Activated naive CD4-positive, alpha-beta T cell treated with anti-CD3 and anti-CD28 coated beads for 36 hours (primary cell): ENCODE measurements at regions of chr3 and their contacts with region 1.

Region 1: GRCh38 chr3:129112308-129113052 is 9.1 kb downstream of the RAB43 start:
- DNase-seq: peak; percentile 93
- H3K4me3 Mint-ChIP-seq: peak overlapping the region; percentile 68
- H3K27ac Mint-ChIP-seq: peak overlapping the region; percentile 96
- H3K4me1 Mint-ChIP-seq: peaks cover 84% of the 10 kb centered on the region
- H3K27me3 Mint-ChIP-seq: no peaks in the 10 kb centered on the region

Region 2: DNA sequence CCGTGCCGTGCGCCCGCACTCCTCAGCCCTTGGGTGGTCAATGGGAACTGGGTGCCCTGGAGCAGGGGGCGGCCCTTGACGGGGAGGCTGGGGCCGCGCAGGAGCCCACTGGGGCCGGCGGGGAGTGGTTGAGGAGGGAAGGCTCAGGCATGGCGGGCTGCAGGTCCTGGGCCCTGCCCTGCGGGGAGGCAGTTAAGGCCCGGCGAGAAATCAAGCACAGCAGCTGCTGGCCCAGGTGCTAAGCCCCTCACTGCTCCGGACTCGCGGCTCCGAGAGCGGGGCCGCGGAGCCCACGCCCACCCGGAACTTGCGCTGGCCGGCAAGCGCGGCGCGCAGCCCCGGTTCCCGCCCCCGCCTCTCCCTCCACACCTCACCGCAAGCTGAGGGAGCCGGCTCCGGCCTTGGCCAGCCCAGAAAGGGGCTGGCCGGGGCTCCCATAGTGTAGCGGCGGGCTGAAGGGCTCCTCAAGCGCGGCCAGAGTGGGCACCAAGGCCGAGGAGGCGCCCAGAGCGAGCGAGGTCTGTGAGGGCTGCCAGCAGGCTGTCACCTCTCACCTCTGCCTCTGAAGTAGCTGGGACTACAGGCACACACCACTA is 44.1 kb before region 1 on chr3:
- CTCF ChIA-PET with region 1: no interaction called
- intact Hi-C with region 1: loop called (anchors 2 kb)
- DNase-seq: no peak
- H3K4me3 Mint-ChIP-seq: peak overlapping the region; percentile 56
- H3K27ac Mint-ChIP-seq: no peak overlapping the region
- H3K4me1 Mint-ChIP-seq: peaks cover 8% of the 10 kb centered on the region
- H3K27me3 Mint-ChIP-seq: peaks cover 3% of the 10 kb centered on the region